WTC11 (cell line): ENCODE measurements at regions of chr16 and their contacts with region 1.

Region 1: DNA sequence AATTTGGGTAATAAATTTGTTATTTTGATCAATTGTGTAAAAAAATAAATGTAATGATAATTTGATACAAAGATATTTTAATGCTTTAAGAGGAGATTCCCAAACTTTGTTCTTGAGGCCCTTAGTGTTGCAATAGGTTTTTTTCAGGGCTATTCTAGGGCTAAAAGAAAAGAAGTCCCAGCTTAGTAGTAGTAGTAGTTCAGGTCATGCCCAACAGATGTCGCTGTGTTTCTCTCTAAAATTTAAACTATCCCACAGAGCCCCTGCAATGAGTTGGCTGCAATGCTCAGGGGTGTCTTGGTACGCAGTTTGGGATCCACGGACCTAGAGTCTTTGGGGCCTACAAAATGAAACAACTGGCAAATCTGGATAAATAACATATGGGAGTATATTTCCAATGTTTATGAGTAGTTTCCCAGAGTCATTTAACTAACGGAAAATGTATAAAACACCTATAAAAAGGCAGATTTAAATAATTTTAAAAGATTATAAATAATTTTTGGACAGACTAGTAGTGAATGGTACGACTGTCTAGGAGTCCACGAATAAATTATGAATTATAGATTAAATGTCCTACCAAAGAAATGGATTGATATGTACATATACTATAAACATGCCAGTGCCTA is 228.4 kb upstream of the PMFBP1 start:
- DNase-seq: peak; percentile 60
- ATAC-seq: peak; percentile 97
- H3K4me3 Mint-ChIP-seq: no peak overlapping the region
- H3K27ac Mint-ChIP-seq: peak overlapping the region; percentile 59; the same call in 1 of the 2 replicates
- H3K4me1 Mint-ChIP-seq: peaks cover 6% of the 10 kb centered on the region; the same call in 1 of the 2 replicates
- H3K27me3 Mint-ChIP-seq: no peaks in the 10 kb centered on the region
- CTCF ChIP-seq: peak; percentile 61

Region 2: DNA sequence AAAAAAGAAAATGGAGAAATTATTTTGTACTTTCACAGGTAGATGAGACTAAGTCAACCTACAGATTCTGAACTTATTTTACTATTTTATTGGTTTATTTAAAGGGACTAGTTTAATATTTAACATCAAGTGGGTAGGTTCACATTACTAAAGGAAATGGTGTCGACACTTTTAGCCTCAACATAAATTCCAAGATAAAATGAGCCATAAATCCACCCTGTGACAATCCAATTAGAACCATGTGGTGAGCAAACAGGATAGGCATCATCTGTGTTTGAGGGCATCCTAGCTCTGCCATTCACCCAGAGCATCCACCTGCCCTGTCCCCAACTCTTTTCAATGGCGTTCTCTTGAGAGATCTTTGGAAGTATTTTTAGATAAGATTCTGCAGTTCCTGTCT is 135.6 kb before region 1 on chr16:
- CTCF ChIA-PET with region 1: no interaction called
- POLR2A ChIA-PET with region 1: no interaction called
- DNase-seq: no peak
- ATAC-seq: no peak
- H3K4me3 Mint-ChIP-seq: no peak overlapping the region
- H3K27ac Mint-ChIP-seq: no peak overlapping the region
- H3K4me1 Mint-ChIP-seq: peaks cover 11% of the 10 kb centered on the region
- H3K27me3 Mint-ChIP-seq: no peaks in the 10 kb centered on the region
- CTCF ChIP-seq: no peak

Region 3: DNA sequence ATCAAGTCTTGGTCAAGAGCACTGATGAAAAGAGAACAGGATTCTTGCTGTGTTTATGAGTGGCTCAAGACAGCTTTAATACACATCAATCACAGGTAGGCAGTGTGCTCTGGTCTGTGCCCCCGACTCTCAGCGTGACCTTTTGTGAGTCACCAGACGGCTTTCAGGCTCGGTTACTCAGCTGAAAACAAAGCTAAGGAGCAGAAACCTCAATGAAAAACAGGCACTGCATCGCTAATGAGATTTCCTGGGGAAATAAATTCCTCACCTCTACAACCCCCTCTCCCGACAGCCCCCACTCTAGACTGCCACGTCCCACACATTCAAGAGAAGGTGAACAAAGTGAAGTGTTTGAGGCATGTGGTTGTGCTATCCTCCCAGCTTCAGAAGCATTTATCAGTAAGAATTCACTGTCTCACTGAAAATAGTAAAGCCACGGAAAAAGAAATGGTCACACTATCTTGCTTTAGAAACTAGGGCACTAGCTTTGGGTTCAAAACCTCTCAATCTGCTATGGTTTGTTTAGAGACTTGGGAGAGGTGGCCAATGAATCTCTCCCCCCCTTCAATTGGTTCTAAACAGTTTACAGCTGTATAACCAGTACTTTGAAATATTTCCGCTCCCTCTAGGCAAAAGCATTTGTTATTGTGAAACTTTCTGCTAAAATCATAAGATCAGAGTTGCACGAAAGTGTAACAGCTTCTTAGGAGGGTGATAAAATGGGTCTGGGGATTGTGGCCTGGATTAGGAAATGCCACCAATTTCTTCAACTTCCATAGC is 28.9 kb before region 1 on chr16:
- CTCF ChIA-PET with region 1: interaction called, 14 read pairs
- POLR2A ChIA-PET with region 1: no interaction called
- DNase-seq: peak; percentile 44
- ATAC-seq: peak; percentile 95
- H3K4me3 Mint-ChIP-seq: no peak overlapping the region
- H3K27ac Mint-ChIP-seq: peak overlapping the region; percentile 75
- H3K4me1 Mint-ChIP-seq: peaks cover 45% of the 10 kb centered on the region
- H3K27me3 Mint-ChIP-seq: no peaks in the 10 kb centered on the region
- CTCF ChIP-seq: no peak

Region 4: GRCh38 chr16:72389791-72390190 is 10.6 kb before region 1 on chr16:
- CTCF ChIA-PET with region 1: interaction called, 15 read pairs
- POLR2A ChIA-PET with region 1: no interaction called
- DNase-seq: no peak
- ATAC-seq: no peak
- H3K4me3 Mint-ChIP-seq: no peak overlapping the region
- H3K27ac Mint-ChIP-seq: no peak overlapping the region
- H3K4me1 Mint-ChIP-seq: peaks cover 4% of the 10 kb centered on the region
- H3K27me3 Mint-ChIP-seq: no peaks in the 10 kb centered on the region
- CTCF ChIP-seq: no peak